B cell (primary cell): ENCODE measurements at regions of chr5 and their contacts with region 1.

Region 1: DNA sequence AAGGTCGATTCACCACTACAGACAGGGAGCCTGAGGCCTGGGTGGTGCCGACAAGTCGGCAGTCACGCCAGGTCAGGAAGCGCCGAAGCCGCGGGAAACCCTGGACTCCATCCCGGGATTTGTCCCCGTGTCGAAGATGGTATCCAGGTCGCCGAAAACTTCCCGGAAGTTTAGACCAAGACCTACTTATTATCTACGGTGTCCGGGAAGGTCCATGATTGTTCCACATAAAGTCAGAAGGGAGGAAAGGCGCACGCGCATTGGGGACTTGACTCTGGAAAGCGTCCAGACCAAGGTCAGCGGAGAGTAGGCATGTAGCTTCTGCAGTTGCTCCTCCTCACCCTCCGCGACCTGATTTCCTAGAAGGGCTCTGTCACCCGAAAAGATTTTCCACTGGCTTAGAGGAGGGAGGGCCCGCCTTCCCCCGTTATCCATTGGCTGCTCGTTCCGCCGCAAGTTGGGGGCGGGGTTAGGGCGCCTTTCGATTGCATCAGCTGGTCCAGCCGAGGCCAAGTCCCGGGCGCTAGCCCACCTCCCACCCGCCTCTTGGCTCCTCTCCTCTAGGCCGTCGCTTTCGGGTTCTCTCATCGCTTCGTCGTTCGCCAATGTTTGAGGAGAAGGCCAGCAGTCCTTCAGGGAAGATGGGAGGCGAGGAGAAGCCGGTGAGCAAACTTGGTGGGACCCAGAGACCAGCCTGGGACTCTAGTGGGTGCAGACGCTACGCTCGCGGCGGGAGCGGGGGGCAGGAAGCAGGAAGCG is at the start of gene TARS1:
- DNase-seq: peak; percentile 93
- ATAC-seq: peak; percentile 93
- H3K4me3 ChIP-seq: peak within 1 kb of the TSS; percentile 81 to 96 (median 88)
- H3K4me3 Mint-ChIP-seq: no peak within 1 kb of the TSS
- H3K27ac ChIP-seq: peak within 1 kb of the TSS; percentile 72 to 88
- H3K27ac Mint-ChIP-seq: no peak within 1 kb of the TSS
- H3K4me1 ChIP-seq: peaks cover 19 to 20% of the 10 kb centered on the region in 2 donors
- H3K4me1 Mint-ChIP-seq: peaks cover 20% of the 10 kb centered on the region
- H3K27me3 ChIP-seq: no peaks in the 10 kb centered on the region
- H3K27me3 Mint-ChIP-seq: no peaks in the 10 kb centered on the region
- CTCF ChIP-seq: no peak
- total RNA-seq, gene TARS1: 58.6 and 66.0 TPM in 2 replicates

Region 2: DNA sequence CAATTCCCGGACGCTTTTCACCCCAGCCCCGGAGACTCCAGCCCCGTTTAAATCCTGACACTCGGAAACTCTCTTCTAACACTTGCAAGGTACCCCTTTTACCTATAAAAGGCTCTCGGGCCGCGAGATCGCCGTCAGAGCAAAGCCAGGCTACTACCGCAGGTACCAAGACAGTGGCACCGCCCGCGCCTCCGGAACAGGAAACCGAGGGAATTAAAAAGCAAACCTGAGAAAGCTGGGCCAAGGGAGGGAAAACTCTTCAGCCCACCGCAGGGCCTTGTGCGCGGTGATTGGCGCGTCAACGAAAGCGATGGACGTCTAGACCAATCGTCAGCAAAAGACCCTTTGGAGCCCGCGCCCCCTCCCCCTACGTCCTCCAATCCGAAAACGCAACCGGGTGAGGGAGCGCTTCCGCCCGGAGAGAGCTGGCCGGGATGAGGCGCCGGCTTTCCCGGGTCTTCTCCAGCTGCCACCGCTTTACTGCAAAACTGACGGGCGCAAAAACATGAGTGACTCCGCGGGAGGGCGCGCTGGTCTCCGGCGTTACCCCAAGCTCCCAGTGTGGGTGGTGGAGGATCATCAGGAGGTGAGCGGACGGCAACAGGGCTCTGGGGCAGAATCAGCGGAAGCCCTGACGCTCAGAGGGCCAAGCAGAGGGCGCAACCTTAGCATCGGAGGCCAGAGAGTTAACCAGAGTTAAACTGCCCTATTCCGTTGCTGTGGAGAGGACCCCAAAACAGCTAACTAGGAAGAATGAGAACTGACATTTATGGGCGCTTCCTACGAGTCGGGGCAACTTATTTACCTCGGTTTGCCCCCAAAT is 1908.6 kb before region 1 on chr5 and contains the starts of genes C5orf22 and DROSHA:
- CTCF ChIA-PET with region 1: no interaction called
- POLR2A ChIA-PET with region 1: no interaction called
- intact Hi-C with region 1: loop called (anchors 5 kb)
- DNase-seq: peak; percentile 90
- ATAC-seq: peak; percentile 98
- H3K4me3 ChIP-seq: peak within 1 kb of the TSS; percentile 64 to 94 (median 91)
- H3K4me3 Mint-ChIP-seq: peak within 1 kb of the TSS; percentile 100
- H3K27ac ChIP-seq: peak within 1 kb of the TSS; percentile 29 to 70
- H3K27ac Mint-ChIP-seq: peak within 1 kb of the TSS; percentile 94
- H3K4me1 ChIP-seq: peaks cover 23% of the 10 kb centered on the region in 2 donors
- H3K4me1 Mint-ChIP-seq: peaks cover 38% of the 10 kb centered on the region
- H3K27me3 ChIP-seq: no peaks in the 10 kb centered on the region
- H3K27me3 Mint-ChIP-seq: no peaks in the 10 kb centered on the region
- CTCF ChIP-seq: no peak
- total RNA-seq, gene C5orf22: 28.2 and 28.9 TPM in 2 replicates
- total RNA-seq, gene DROSHA: 62.4 and 65.4 TPM in 2 replicates

Region 3: GRCh38 chr5:33936004-33936380 is 495.3 kb after region 1 on chr5:
- CTCF ChIA-PET with region 1: interaction called, 97 read pairs
- POLR2A ChIA-PET with region 1: no interaction called
- intact Hi-C with region 1: loop called (anchors 1 kb)
- DNase-seq: peak; percentile 44
- ATAC-seq: no peak
- H3K4me3 ChIP-seq: no peak overlapping the region
- H3K4me3 Mint-ChIP-seq: no peak overlapping the region
- H3K27ac ChIP-seq: no peak overlapping the region
- H3K27ac Mint-ChIP-seq: no peak overlapping the region
- H3K4me1 ChIP-seq: peaks cover 13 to 20% of the 10 kb centered on the region in 2 donors
- H3K4me1 Mint-ChIP-seq: peaks cover 17% of the 10 kb centered on the region
- H3K27me3 ChIP-seq: peaks cover 0 to 41% (median 23%) of the 10 kb centered on the region in 4 experiments
- H3K27me3 Mint-ChIP-seq: peaks cover 39% of the 10 kb centered on the region
- CTCF ChIP-seq: no peak

Region 4: DNA sequence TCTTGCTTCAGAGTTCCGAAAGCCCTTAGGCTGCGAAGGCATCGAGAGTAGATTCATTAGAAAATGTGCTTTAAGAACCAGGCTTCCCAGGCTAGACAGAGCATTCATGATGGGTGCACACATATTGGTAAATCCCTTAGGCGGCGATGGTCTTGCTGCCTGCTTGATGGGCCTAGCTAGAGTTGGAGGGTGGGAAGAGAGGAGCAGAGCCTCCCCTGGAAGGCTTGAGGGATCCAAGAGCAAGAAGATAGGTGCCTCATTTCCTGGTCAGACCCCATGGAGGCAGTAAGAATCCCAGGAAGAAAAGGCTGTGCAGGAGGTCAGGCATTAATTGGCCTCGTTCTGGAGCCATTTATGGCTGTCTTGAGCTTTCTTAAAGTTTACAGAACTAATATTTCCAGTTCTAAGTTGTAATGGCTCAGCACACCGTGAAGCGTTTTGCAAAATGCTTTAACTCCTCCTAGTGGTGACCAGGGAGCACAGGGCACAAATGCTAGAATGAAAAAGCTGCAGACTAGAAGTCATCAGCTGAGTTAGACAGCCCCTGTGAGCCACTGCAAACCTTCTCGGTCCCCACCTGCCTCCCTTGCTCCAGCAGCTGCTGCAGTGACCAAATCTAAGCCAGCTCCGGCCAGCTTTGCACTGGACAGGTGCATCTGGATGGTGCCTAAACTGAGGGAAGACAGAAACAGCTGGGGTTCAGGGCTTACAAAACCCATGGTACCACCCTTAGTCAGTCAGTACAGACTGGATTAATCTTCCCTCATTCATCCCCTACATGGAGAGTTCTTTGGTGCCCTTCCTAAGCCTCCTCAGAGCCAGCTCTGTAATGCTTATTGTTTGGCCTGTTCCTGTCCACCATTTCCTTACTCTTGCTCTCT is 529.2 kb after region 1 on chr5:
- CTCF ChIA-PET with region 1: interaction called, 22 read pairs
- POLR2A ChIA-PET with region 1: no interaction called
- intact Hi-C with region 1: no loop called
- DNase-seq: peak; percentile 14
- ATAC-seq: no peak
- H3K4me3 ChIP-seq: no peak overlapping the region
- H3K4me3 Mint-ChIP-seq: no peak overlapping the region
- H3K27ac ChIP-seq: no peak overlapping the region
- H3K27ac Mint-ChIP-seq: no peak overlapping the region
- H3K4me1 ChIP-seq: no peaks in the 10 kb centered on the region
- H3K4me1 Mint-ChIP-seq: no peaks in the 10 kb centered on the region
- H3K27me3 ChIP-seq: peaks cover 0 to 5% (median 0%) of the 10 kb centered on the region in 4 experiments
- H3K27me3 Mint-ChIP-seq: peaks cover 3% of the 10 kb centered on the region
- CTCF ChIP-seq: peak; percentile 53

Region 5: DNA sequence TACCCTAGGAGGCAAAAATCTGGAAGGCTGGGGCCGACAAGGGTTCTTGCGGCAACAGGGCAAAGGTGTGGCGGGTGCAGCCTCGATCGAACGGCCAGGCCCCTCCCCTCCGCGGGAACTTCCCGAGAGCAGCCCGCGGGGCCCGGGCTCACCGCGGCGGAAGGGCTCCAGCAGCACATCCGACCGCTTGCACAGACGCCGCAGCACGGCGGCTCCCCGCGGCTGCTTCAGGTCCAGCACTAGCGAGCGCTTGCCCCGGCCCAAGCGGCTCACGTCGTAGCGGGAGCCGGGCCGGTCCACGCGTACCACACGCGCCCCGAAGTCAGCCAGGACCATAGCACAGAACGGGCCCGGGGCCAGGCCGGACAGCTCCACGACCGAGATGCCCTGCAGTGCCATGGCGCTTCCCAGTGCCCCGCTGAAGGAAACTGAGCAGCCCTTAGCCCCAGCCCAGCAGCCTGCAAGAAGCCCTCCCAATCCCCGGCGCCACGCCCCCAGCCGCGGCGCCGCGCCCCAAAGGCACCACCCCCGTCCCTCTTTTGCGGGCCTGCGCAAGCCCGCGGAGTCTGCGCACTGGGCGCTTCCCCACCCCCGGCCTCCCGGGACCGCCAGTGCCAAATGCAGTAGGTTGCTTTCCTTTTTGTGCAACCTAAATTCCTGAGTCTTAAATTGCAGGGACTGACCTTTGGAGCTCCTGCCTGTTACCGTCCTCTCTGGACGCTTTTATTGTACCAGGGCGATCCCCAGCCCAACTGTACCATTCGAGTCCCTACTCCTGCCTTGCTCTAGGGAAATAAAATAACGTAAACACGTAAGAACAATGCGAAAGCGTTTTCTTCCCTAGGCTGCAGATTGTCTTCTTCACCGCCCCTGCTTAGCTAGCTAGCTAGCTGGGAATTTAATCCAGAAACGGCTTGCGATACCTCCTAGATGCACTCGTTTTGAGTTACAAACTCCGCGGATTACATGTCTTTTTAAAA is 567.2 kb after region 1 on chr5 and contains the start of gene AMACR:
- CTCF ChIA-PET with region 1: interaction called, 3 read pairs
- POLR2A ChIA-PET with region 1: interaction called, 3 read pairs
- intact Hi-C with region 1: loop called (anchors 2 kb)
- DNase-seq: peak; percentile 87
- ATAC-seq: peak; percentile 90
- H3K4me3 ChIP-seq: peak within 1 kb of the TSS; percentile 76 to 98 (median 92)
- H3K4me3 Mint-ChIP-seq: peak within 1 kb of the TSS; percentile 95
- H3K27ac ChIP-seq: peak within 1 kb of the TSS; percentile 72 to 77
- H3K27ac Mint-ChIP-seq: peak within 1 kb of the TSS; percentile 92
- H3K4me1 ChIP-seq: peaks cover 9 to 15% of the 10 kb centered on the region in 2 donors
- H3K4me1 Mint-ChIP-seq: peaks cover 22% of the 10 kb centered on the region
- H3K27me3 ChIP-seq: no peaks in the 10 kb centered on the region
- H3K27me3 Mint-ChIP-seq: no peaks in the 10 kb centered on the region
- CTCF ChIP-seq: no peak
- total RNA-seq, gene AMACR: 4.4 and 5.8 TPM in 2 replicates

Region 6: GRCh38 chr5:34474573-34475021 is 1033.9 kb after region 1 on chr5:
- CTCF ChIA-PET with region 1: no interaction called
- POLR2A ChIA-PET with region 1: no interaction called
- intact Hi-C with region 1: loop called (anchors 10 kb)
- DNase-seq: peak; percentile 50
- ATAC-seq: peak; percentile 69
- H3K4me3 ChIP-seq: no peak overlapping the region
- H3K4me3 Mint-ChIP-seq: no peak overlapping the region
- H3K27ac ChIP-seq: no peak overlapping the region
- H3K27ac Mint-ChIP-seq: no peak overlapping the region
- H3K4me1 ChIP-seq: no peaks in the 10 kb centered on the region
- H3K4me1 Mint-ChIP-seq: peaks cover 4% of the 10 kb centered on the region
- H3K27me3 ChIP-seq: peaks cover 0 to 5% (median 0%) of the 10 kb centered on the region in 4 experiments
- H3K27me3 Mint-ChIP-seq: peaks cover 21% of the 10 kb centered on the region
- CTCF ChIP-seq: peak; percentile 98

Region 7: GRCh38 chr5:34929150-34929719 is 1488.6 kb after region 1 on chr5 and contains the start of gene DNAJC21:
- CTCF ChIA-PET with region 1: no interaction called
- POLR2A ChIA-PET with region 1: no interaction called
- intact Hi-C with region 1: loop called (anchors 2 kb)
- DNase-seq: peak; percentile 99
- ATAC-seq: peak; percentile 89
- H3K4me3 ChIP-seq: peak within 1 kb of the TSS; percentile 60 to 88 (median 73)
- H3K4me3 Mint-ChIP-seq: peak within 1 kb of the TSS; percentile 96
- H3K27ac ChIP-seq: peak within 1 kb of the TSS; percentile 67 to 94
- H3K27ac Mint-ChIP-seq: peak within 1 kb of the TSS; percentile 94
- H3K4me1 ChIP-seq: peaks cover 15 to 20% of the 10 kb centered on the region in 2 donors
- H3K4me1 Mint-ChIP-seq: peaks cover 26% of the 10 kb centered on the region
- H3K27me3 ChIP-seq: no peaks in the 10 kb centered on the region
- H3K27me3 Mint-ChIP-seq: no peaks in the 10 kb centered on the region
- CTCF ChIP-seq: no peak
- total RNA-seq, gene DNAJC21: 58.3 and 59.3 TPM in 2 replicates